ENCODE measurements at regions of chr9 and their contacts with region 1.

Region 1: GRCh38 chr9:137095664-137096517 is 9.1 kb downstream of the MAN1B1 start:
- DNase-seq: peak; percentile 61
- ATAC-seq: peak; percentile 99
- H3K4me3 ChIP-seq: peak overlapping the region; percentile 49; the same call in 1 of the 2 replicates
- H3K27ac ChIP-seq: peak overlapping the region; percentile 61
- H3K4me1 ChIP-seq: peaks cover 11% of the 10 kb centered on the region
- H3K27me3 ChIP-seq: no peaks in the 10 kb centered on the region
- CTCF ChIP-seq: peak; percentile 63 to 84 (median 67)
- EP300 ChIP-seq: peak in 1 of 2 experiments; percentile 52; a peak in 2 of 4 replicates
- POLR2A ChIP-seq: peak; percentile 48; the same call in 1 of the 2 replicates
- RAD21 ChIP-seq: no peak

Region 2: GRCh38 chr9:137007108-137007815 is 88.6 kb before region 1 on chr9:
- CTCF ChIA-PET with region 1: no interaction called
- POLR2A ChIA-PET with region 1: no interaction called
- RAD21 ChIA-PET with region 1: no interaction called
- SMC1A ChIA-PET with region 1: no interaction called
- in situ Hi-C with region 1: no loop called
- intact Hi-C with region 1: no loop called
- DNase-seq: no peak
- ATAC-seq: no peak
- H3K4me3 ChIP-seq: no peak overlapping the region
- H3K27ac ChIP-seq: no peak overlapping the region
- H3K4me1 ChIP-seq: no peaks in the 10 kb centered on the region
- H3K27me3 ChIP-seq: no peaks in the 10 kb centered on the region
- CTCF ChIP-seq: no peak
- EP300 ChIP-seq: no peak
- POLR2A ChIP-seq: no peak
- RAD21 ChIP-seq: no peak

Region 3: GRCh38 chr9:137046098-137046787 is 49.6 kb before region 1 on chr9 and contains the start of gene NPDC1:
- CTCF ChIA-PET with region 1: interaction called, 12 read pairs
- POLR2A ChIA-PET with region 1: no interaction called
- RAD21 ChIA-PET with region 1: interaction called, 5 read pairs
- SMC1A ChIA-PET with region 1: no interaction called
- in situ Hi-C with region 1: no loop called
- intact Hi-C with region 1: no loop called
- DNase-seq: no peak
- ATAC-seq: peak; percentile 90
- H3K4me3 ChIP-seq: no peak within 1 kb of the TSS
- H3K27ac ChIP-seq: no peak within 1 kb of the TSS
- H3K4me1 ChIP-seq: no peaks in the 10 kb centered on the region
- H3K27me3 ChIP-seq: peaks cover 12 to 18% of the 10 kb centered on the region in 2 experiments; a peak in 3 of 4 replicates
- CTCF ChIP-seq: peak; percentile 82 to 95 (median 93)
- EP300 ChIP-seq: no peak
- POLR2A ChIP-seq: no peak
- RAD21 ChIP-seq: peak; percentile 63
- polyA plus RNA-seq, gene NPDC1: not detected

Region 4: DNA sequence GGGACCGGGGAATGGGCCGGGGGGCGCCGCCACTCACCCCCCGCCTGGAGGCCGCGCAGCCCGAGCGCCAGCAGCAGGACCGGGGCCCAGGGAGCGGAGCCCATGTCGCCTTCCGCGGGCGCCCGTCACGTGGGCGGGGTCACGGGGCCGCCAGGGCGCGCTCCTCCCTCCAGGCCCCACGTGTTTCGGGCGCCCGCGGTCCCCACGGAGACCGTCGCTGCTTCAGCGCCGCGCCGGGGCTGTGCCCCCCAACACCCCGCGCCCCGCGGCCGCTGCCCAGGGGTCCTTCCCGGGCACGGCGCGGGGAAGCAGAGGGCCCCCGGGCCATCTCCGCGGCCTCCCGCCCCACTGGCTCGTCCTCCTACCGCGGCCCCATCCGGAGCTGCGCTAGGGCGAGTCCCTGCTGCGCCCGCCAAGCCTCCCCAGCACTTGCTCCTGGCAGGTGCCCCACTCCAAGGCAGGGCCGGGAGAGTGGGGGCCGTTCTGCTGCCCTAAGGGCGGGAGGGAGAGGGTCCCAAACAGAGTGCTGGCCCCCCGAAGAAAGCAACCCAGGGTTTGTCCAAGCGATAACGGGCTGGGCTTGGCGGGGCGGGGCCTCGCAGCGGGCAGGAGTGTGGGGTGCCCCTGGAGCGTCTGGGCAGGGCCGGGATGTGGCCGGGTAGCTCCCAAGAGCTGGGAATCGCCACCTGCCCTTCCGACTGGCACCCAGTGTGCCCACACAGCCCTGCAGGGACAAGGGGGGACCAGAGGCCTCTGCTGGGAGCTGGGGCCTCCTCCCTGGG is 18.9 kb after region 1 on chr9 and contains the start of gene DPP7:
- CTCF ChIA-PET with region 1: interaction called, 11 read pairs
- POLR2A ChIA-PET with region 1: interaction called, 5 read pairs
- RAD21 ChIA-PET with region 1: interaction called, 8 read pairs
- SMC1A ChIA-PET with region 1: interaction called, 5 read pairs
- in situ Hi-C with region 1: no loop called
- intact Hi-C with region 1: no loop called
- DNase-seq: no peak
- ATAC-seq: peak; percentile 97
- H3K4me3 ChIP-seq: peak within 1 kb of the TSS; percentile 70
- H3K27ac ChIP-seq: peak within 1 kb of the TSS; percentile 58; the same call in 1 of the 2 replicates
- H3K4me1 ChIP-seq: peaks cover 6% of the 10 kb centered on the region; the same call in 1 of the 2 replicates
- H3K27me3 ChIP-seq: no peaks in the 10 kb centered on the region
- CTCF ChIP-seq: no peak
- EP300 ChIP-seq: no peak
- POLR2A ChIP-seq: peak; percentile 87
- RAD21 ChIP-seq: no peak
- polyA plus RNA-seq, gene DPP7: 0.68 to 10.0 TPM

Region 5: DNA sequence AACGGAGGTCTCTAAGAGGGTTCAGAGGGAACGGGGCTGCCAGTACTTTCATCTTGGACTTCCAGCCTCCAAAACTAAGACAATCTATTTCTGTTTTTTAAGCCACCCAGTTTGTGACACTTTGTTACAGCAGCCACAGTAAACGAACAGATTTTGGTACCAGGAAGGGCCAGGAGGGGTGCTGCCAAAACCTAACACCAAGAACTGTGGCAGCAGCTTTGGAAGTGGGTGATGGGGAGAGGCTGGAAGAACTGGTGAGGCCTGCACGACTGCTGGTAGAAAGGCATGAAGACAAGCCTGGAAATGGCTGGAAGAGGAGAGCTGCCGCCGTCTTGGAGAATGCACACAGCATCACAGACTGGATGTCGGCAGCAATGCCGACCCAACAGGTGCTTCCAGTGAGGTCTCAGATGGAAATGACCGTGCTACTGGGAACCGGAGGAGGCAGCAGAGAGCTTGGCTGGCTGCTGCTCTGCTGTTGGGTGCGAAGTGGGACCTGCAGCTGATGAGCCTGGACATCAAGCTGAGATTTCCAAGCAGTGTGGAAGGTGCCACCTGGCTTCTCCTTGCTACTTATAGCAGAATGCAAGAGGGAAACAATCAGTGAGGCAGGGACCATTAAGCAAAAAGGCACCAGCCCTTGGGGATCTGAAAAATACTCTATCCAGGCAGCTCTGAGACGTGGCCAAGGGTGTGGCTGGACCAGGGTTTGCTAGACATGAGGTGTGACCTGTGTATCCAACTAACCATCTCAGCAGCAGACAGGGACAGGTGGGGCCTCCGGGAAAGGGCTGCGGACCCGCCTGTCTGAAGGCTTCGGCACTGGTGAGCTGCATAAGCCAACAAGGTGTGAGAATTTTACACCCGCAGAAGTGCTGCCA is 80.7 kb after region 1 on chr9:
- CTCF ChIA-PET with region 1: interaction called, 13 read pairs
- POLR2A ChIA-PET with region 1: interaction called, 4 read pairs
- RAD21 ChIA-PET with region 1: no interaction called
- SMC1A ChIA-PET with region 1: no interaction called
- in situ Hi-C with region 1: no loop called
- intact Hi-C with region 1: no loop called
- DNase-seq: no peak
- ATAC-seq: peak; percentile 80
- H3K4me3 ChIP-seq: no peak overlapping the region
- H3K27ac ChIP-seq: no peak overlapping the region
- H3K4me1 ChIP-seq: no peaks in the 10 kb centered on the region
- H3K27me3 ChIP-seq: no peaks in the 10 kb centered on the region
- CTCF ChIP-seq: peak; percentile 57 to 64 (median 59); a peak in 5 of 6 replicates
- EP300 ChIP-seq: no peak
- POLR2A ChIP-seq: 0 out of 2 replicates have a peak, but pooled peaks have one; percentile 5
- RAD21 ChIP-seq: peak; percentile 37; the same call in 1 of the 2 replicates

Region 6: DNA sequence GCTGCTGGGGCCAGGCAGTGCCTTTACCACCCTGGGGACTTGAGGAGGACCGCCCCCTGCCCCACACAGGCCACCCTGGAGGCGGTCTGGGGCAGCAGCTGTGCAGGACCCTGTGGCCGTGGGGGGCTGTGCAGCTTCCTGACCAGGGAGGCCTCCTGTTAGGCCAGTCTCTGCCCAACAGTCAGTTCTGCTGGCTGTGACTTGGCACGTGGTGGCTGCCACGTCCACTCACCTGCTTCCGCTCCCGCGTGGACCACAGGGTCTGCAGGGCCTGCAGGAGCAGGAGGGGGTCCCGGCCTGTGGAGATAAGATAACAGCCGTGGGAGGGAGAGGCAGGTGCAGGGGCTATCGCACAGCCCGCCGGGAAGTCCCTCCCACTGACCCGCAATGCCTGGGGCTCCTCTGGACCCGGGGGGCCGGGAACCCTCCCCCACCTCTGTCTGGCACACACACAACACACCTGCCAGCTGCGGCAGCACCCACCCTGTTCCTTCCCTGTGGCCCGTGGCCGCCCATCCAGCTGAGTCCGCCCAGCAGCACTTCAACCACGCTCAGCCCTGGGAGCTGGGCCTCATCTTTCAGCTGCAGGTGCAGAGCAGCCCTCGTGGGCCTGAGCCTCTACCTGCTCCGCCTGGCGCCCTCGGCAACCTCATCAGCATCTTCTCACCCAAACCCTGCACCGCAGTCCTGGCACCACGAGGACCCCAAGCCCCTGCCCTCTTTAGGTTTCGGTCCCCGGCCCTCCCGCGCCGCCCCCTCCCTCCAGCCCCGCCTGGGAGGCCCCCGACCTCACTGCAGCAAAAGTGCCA is 287.4 kb after region 1 on chr9:
- CTCF ChIA-PET with region 1: no interaction called
- POLR2A ChIA-PET with region 1: no interaction called
- RAD21 ChIA-PET with region 1: no interaction called
- SMC1A ChIA-PET with region 1: no interaction called
- in situ Hi-C with region 1: no loop called
- intact Hi-C with region 1: no loop called
- DNase-seq: no peak
- ATAC-seq: peak; percentile 19; the same call in 1 of the 3 replicates
- H3K4me3 ChIP-seq: no peak overlapping the region
- H3K27ac ChIP-seq: no peak overlapping the region
- H3K4me1 ChIP-seq: no peaks in the 10 kb centered on the region
- H3K27me3 ChIP-seq: no peaks in the 10 kb centered on the region
- CTCF ChIP-seq: no peak
- EP300 ChIP-seq: no peak
- POLR2A ChIP-seq: no peak
- RAD21 ChIP-seq: no peak